ENCODE measurements at regions of chr7 and their contacts with region 1.

Region 1: GRCh38 chr7:37916673-37917660 is at the start of gene SFRP4:
- DNase-seq: peak; percentile 56
- H3K4me3 ChIP-seq: peak within 1 kb of the TSS in 1 of 3 experiments; percentile 20
- H3K27ac ChIP-seq: no peak within 1 kb of the TSS
- H3K4me1 ChIP-seq: peaks cover 4% of the 10 kb centered on the region
- H3K27me3 ChIP-seq: peaks cover 31 to 42% of the 10 kb centered on the region in 2 experiments
- CTCF ChIP-seq: peak; percentile 54 to 66
- POLR2A ChIP-seq: no peak
- total RNA-seq, gene SFRP4: not detected in 2 replicates

Region 2: GRCh38 chr7:37901236-37901827 is 15.6 kb before region 1 on chr7:
- CTCF ChIA-PET with region 1: interaction called, 23 read pairs
- POLR2A ChIA-PET with region 1: no interaction called
- dilution Hi-C with region 1: no loop called
- intact Hi-C with region 1: no loop called
- DNase-seq: peak; percentile 52
- H3K4me3 ChIP-seq: no peak overlapping the region
- H3K27ac ChIP-seq: no peak overlapping the region
- H3K4me1 ChIP-seq: no peaks in the 10 kb centered on the region
- H3K27me3 ChIP-seq: no peaks in the 10 kb centered on the region
- CTCF ChIP-seq: peak; percentile 18 to 35
- POLR2A ChIP-seq: no peak

Region 3: GRCh38 chr7:37930226-37930948 is 13.4 kb after region 1 on chr7:
- CTCF ChIA-PET with region 1: interaction called, 13 read pairs
- POLR2A ChIA-PET with region 1: no interaction called
- dilution Hi-C with region 1: no loop called
- intact Hi-C with region 1: no loop called
- DNase-seq: no peak
- H3K4me3 ChIP-seq: no peak overlapping the region
- H3K27ac ChIP-seq: no peak overlapping the region
- H3K4me1 ChIP-seq: no peaks in the 10 kb centered on the region
- H3K27me3 ChIP-seq: no peaks in the 10 kb centered on the region
- CTCF ChIP-seq: no peak
- POLR2A ChIP-seq: no peak